ENCODE measurements at regions of chr1 and their contacts with region 1.

Region 1: DNA sequence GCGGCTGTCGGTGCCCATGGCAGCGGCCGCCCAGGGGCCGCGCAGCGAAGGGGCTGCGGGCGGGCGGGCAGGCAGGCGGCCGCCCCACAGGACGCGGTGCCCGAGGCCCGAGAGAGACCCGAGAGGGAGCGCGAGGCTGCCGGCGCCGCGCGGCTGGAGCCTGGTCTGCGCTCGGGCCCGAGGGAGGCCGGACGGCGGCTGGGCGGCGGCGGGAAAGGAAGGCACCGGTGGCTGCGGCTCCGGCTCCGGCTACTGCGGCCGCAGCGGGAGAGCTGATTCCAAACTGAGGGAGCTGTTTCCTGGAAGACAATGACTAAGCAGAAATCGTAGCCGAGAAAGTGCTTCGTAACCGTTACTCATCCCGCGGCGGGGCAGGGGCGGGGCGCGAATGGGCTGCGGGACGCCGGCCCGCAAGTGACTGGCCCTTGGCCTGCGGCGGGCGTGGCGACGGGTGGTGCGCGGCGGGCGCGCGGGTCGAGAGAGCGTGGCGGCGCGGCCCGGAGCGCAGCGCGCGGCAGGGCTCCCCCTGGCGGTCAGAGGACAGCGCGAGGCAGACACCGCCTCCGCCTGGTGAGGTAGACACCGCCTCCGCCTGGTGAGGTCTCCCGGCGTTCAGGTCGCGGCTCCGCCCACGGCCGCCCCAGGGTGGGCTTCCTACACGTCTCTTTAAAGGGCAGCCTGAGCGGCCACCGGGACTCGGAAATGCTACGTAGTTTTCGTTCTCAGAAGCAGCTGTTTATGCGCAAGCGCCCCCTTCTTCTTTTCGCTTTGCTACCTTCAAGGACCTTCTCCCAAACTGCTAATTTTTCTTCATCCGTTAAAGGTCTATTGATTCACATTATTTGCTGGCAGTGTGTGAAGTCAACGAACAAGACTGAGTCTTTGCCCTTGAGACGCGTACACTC is at the start of gene GCLM:
- DNase-seq: peak; percentile 79 to 97
- H3K4me3 ChIP-seq: peak within 1 kb of the TSS; percentile 92 to 96
- H3K27ac ChIP-seq: peak within 1 kb of the TSS; percentile 82 to 89
- H3K4me1 ChIP-seq: peaks cover 0 to 7% of the 10 kb centered on the region in 2 donors
- H3K27me3 ChIP-seq: no peaks in the 10 kb centered on the region
- CTCF ChIP-seq: peak; percentile 67 to 95 (median 80)
- total RNA-seq, gene GCLM: 3.3 TPM

Region 2: DNA sequence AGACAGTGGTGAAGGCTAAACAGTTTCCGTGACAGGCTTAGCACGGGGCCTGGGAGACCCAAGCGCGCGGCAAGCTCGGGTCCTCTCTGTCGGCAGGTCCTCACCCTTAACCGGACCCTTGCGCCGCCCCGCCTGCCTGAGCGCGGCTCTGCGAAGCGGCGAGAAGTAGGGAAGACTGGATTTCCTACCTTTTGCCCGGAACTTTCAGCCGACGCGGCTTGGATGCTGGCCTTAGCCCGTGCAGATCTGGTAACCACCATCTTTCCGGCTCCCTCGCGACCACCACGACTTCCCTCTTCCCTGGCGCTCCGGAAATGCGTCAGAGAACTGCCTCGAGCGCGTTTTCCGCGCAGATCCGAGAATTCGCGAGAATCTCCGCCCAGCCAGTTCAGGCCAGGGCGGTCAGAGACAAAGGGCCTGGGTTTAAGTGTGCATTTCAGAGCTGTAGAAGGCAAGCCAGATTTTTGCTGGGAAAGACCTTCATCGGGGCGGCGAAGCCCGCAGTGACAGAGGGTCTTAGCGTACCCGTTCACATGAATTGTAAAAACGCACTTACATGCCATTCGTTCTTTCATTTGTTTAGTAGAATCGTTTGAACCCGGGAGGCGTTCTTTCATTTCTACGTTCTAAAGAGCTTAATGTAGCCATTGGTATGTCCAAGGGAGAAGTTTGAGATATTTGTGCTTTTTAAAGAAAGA is 30.4 kb before region 1 on chr1 and contains the start of gene DNTTIP2:
- intact Hi-C with region 1: loop called (anchors 1 kb)
- DNase-seq: peak; percentile 68 to 94
- H3K4me3 ChIP-seq: peak within 1 kb of the TSS; percentile 90 to 100
- H3K27ac ChIP-seq: peak within 1 kb of the TSS; percentile 94
- H3K4me1 ChIP-seq: peaks cover 0 to 17% of the 10 kb centered on the region in 2 donors
- H3K27me3 ChIP-seq: no peaks in the 10 kb centered on the region
- CTCF ChIP-seq: no peak
- total RNA-seq, gene DNTTIP2: 27.1 TPM

Region 3: GRCh38 chr1:93919780-93920179 is 10.4 kb after region 1 on chr1:
- intact Hi-C with region 1: no loop called
- DNase-seq: no peak
- H3K4me3 ChIP-seq: no peak overlapping the region
- H3K27ac ChIP-seq: no peak overlapping the region
- H3K4me1 ChIP-seq: no peaks in the 10 kb centered on the region
- H3K27me3 ChIP-seq: no peaks in the 10 kb centered on the region
- CTCF ChIP-seq: no peak

Measured in ascending aorta (tissue), 2 donors.